Posterior vena cava (tissue), 2 donors: ENCODE measurements at regions of chr2 and their contacts with region 1.

Region 1: GRCh38 chr2:42086500-42086953 is 38.7 kb downstream of the PKDCC start:
- DNase-seq: no peak

Region 2: DNA sequence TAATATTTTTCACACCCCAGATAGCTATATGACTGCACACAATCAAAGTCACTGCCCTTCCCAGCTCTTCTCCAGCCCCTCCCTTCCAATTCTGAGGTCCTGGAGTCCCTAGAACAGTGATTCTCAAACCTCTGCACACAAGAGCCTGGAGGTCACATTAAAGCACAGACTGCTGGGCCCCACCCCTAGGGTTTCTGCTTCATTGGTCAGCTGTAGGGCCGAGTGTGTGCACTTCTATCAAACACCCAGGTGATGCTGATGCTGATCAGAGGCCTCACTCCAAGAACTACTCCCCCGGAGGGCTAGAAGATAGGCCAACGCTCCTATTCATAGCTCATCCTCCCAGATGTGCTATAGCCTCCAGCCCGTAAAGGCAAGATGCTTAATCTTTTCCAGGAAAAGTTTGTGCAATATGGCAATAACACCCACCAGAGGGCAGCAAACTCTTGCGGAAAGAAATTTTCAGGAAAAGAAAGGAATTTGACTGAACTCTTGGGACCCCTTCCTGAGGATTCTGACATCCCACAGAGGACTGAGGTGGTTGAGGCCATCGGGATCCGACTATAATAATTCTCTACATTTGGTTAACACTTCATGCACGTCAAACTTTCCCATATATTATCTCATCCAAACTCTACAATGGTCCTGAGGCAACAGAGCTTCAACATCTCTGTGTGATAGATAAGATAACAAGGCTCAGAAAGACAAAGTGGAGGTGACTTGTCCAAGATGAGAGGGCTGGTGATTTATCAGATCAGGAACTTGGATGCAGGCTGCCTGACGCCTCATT is 232.9 kb before region 1 on chr2:
- intact Hi-C with region 1: loop called (anchors 5 kb)
- DNase-seq: no peak

Region 3: DNA sequence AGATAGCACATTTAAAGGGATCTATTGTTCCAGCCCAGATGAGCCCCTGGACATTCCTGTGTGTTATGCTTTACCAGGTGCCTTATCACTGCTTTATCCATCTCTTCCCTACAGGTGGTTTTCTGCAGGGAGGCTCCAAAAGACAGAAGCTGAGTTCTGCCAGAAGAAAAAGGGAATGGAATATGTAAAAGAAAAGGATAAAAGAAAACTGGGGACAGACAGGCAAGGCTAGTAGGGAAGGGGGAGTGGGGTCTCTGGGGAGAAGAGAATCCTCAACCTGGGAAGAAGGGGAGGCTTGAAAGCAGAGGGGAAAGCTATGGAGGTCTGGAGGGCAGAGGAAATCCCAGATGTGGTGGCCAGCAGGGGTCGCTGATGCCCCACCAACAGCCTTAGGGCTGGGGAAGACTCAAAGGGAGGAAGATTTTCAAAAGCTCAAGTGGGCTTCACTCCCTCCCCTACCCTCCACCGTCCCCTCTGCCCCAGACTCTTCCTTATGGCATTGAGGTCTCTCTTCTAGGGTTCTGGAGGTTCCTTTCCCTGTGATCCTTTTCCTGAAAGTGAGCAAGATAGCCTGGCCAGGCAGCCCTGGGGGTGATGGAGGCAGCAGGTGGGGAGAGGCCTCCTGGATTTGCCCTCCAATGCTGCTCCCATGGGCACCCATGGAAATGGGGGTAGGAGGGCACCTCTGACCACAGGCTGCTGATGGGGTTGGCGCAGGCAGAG is 216.8 kb before region 1 on chr2:
- intact Hi-C with region 1: loop called (anchors 2 to 5 kb)
- DNase-seq: peak; percentile 92

Region 4: DNA sequence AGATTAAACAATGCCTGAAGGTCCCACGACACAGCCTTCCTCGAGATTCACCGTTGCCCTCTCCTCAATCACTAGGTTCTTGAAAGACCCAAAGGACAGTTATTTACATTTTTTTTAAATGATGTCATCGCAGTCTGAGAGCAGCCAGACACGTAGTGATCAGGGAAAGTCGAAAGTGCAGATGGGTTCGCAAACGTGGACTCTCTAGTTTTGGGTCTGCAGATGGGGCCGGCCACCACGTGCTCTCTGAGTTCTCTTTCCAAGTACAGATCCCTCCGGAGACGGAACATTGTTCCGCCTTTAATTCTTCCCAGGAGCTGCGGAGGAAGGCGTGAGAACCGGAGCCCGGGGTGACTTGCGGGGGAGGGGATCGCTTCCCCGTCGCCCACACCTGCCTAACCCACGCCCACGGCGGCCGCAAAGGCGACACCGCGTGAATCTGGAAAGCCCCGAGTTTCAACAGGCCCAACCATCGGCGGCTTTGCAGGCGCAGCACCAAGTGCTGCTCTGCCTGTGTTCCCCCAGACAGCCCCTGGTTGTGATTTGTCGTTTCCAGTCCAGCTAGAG is 15.6 kb after region 1 on chr2:
- intact Hi-C with region 1: no loop called
- DNase-seq: peak; percentile 86